ENCODE measurements at regions of chr1 and their contacts with region 1.

Region 1: DNA sequence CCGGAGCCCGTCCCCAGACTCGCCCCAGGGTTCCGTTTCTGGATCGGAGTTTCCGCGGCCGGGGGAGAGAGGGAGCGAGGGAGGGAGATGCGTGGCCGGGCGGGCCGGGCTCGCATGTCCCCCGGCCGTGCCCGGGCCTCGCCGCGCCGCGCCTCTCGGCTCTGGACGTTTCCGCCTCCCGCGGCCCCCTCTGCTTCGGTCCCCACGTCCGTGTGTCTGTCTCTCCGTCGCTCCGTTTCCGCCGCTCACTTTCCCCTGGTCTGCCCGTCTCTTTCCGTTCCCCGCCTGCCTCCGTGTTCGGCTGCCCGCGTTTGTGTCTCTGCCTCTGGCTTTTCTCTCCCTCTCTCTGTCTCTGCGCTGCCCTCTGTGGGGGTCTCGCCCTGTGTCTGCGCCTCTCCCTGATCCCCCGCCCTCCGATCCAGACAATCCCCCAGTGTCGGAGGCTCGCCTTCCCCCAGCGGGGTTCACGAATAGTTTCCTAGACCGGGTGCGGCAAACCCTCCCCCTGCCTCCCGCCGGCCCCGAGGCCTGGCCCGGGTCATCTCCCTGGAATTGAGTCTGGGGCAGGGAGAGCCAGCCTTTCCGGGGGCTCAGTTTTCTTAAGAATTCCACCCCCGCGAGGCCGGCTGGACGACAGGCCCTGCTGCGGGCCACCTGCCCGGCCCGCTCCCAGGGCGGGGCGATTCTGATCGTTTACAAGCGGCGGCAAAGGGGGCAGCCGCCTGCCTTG is 735 bp downstream of the NBL1 start:
- DNase-seq: peak; percentile 42 to 72
- H3K4me3 ChIP-seq: peak overlapping the region; percentile 73 to 77 (median 74)
- H3K27ac ChIP-seq: peak overlapping the region; percentile 82 to 96 (median 89)
- H3K4me1 ChIP-seq: peaks cover 52 to 78% (median 66%) of the 10 kb centered on the region in 4 donors
- H3K27me3 ChIP-seq: peaks cover 0 to 27% (median 0%) of the 10 kb centered on the region in 3 donors
- CTCF ChIP-seq: no peak
- EP300 ChIP-seq: no peak
- POLR2A ChIP-seq: no peak

Region 2: GRCh38 chr1:19251305-19252196 is 393.3 kb before region 1 on chr1 and contains the starts of genes EMC1 and MRTO4:
- intact Hi-C with region 1: no loop called
- DNase-seq: peak; percentile 85 to 96
- H3K4me3 ChIP-seq: peak within 1 kb of the TSS; percentile 73 to 99 (median 88)
- H3K27ac ChIP-seq: peak within 1 kb of the TSS; percentile 86 to 98 (median 96)
- H3K4me1 ChIP-seq: peaks cover 25 to 55% (median 41%) of the 10 kb centered on the region in 4 donors
- H3K27me3 ChIP-seq: no peaks in the 10 kb centered on the region
- CTCF ChIP-seq: peak in 1 of 7 experiments; percentile 24
- EP300 ChIP-seq: no peak
- POLR2A ChIP-seq: no peak
- total RNA-seq, gene EMC1: 27.7 to 94.1 (median 53.5) TPM
- total RNA-seq, gene MRTO4: 1.8 to 22.0 (median 8.1) TPM

Region 3: GRCh38 chr1:19484798-19485361 is 160.0 kb before region 1 on chr1:
- intact Hi-C with region 1: loop called (anchors 5 kb)
- DNase-seq: peak in 1 of 2 donors; percentile 72
- H3K4me3 ChIP-seq: peak overlapping the region; percentile 75 to 99 (median 92)
- H3K27ac ChIP-seq: peak overlapping the region; percentile 87 to 100 (median 100)
- H3K4me1 ChIP-seq: peaks cover 49 to 76% (median 67%) of the 10 kb centered on the region in 4 donors
- H3K27me3 ChIP-seq: no peaks in the 10 kb centered on the region
- CTCF ChIP-seq: no peak
- EP300 ChIP-seq: no peak
- POLR2A ChIP-seq: no peak

Region 4: DNA sequence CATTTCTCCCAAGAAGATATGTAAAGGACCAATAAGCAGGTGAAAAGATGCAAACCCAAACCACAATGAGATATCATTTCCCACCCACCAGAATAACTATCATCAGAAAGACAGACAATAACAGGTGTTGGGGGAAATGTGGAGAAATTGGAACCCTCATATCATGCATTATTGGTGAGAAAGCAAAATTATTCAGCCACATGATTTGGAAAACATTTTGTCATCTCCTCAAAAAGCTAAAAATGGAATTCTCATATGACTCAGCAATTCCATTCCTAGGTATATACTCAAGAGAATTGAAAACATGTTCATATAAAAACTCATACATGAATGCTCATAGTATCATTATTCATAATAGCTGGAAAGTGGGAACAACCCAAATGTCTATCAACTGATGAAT is 195.4 kb after region 1 on chr1:
- intact Hi-C with region 1: no loop called
- DNase-seq: no peak
- H3K4me3 ChIP-seq: no peak overlapping the region
- H3K27ac ChIP-seq: no peak overlapping the region
- H3K4me1 ChIP-seq: no peaks in the 10 kb centered on the region
- H3K27me3 ChIP-seq: no peaks in the 10 kb centered on the region
- CTCF ChIP-seq: no peak
- EP300 ChIP-seq: no peak
- POLR2A ChIP-seq: no peak

Region 5: DNA sequence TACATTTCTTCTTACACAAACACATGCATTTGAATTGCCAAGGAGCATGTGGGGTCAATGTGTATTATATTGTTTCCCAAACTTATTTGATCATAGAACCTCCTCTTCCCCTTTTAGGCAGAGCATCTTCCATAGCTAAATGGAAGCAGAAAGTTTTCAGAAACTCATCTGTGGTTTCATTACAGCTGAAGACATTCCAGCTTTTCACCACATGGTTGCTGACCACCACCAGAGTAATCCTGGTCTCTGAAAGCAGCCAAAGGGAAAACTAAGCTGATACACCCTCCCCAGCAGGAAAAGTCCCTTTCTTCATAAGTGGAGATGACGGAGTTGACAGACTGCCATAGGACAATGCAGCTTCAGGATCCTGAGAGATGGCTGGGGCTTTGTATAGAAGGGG is 207.2 kb after region 1 on chr1:
- intact Hi-C with region 1: no loop called
- DNase-seq: no peak
- H3K4me3 ChIP-seq: no peak overlapping the region
- H3K27ac ChIP-seq: no peak overlapping the region
- H3K4me1 ChIP-seq: no peaks in the 10 kb centered on the region
- H3K27me3 ChIP-seq: no peaks in the 10 kb centered on the region
- CTCF ChIP-seq: no peak
- EP300 ChIP-seq: no peak
- POLR2A ChIP-seq: no peak